Activated CD8-positive, alpha-beta memory T cell treated with anti-CD3 and anti-CD28 coated beads, Interleukin-2, amount 10 ng/mL, durations not matched to agents 7 days and 5 days (primary cell): ENCODE measurements at regions of chr7 and their contacts with region 1.

Region 1: DNA sequence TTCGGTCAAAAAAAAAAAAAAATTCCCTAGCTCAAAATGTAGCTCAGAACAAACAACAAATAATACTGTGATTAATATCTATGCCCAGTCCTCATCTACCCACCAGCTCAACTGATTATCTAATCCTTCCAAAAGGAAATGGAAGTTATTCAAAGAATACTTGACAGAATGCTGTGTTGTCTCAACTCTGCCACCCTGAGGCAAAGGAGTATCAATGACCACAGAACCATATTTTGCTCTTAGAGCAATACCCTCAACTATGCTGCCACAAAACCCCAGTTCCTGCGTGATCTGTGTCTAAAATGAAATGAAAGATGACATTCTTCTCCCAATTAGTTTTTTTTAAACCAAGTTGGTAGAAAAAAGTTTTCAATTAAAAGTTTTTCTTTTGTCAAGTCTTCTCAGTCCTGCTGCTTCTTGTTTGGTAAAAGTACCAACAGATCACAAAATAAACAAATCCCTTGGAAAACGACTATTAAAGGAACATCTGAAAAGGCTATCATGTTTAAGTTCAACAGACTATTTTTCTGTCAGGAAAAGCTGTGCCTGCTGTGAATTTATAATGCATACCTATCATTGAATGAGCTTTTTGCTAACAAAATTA is 21.6 kb downstream of the RBM28 start:
- DNase-seq: peak; percentile 71
- ATAC-seq: peak; percentile 63
- H3K4me3 Mint-ChIP-seq: peak overlapping the region; percentile 35
- H3K27ac Mint-ChIP-seq: peak overlapping the region; percentile 99
- H3K4me1 Mint-ChIP-seq: peaks cover 43% of the 10 kb centered on the region
- H3K27me3 Mint-ChIP-seq: no peaks in the 10 kb centered on the region

Region 2: GRCh38 chr7:128335734-128336133 is 13.6 kb after region 1 on chr7:
- CTCF ChIA-PET with region 1: interaction called, 18 read pairs
- DNase-seq: no peak
- ATAC-seq: no peak
- H3K4me3 Mint-ChIP-seq: no peak overlapping the region
- H3K27ac Mint-ChIP-seq: no peak overlapping the region
- H3K4me1 Mint-ChIP-seq: peaks cover 3% of the 10 kb centered on the region
- H3K27me3 Mint-ChIP-seq: no peaks in the 10 kb centered on the region